Posterior vena cava (tissue), 2 donors: ENCODE measurements at regions of chr1 and their contacts with region 1.

Region 1: DNA sequence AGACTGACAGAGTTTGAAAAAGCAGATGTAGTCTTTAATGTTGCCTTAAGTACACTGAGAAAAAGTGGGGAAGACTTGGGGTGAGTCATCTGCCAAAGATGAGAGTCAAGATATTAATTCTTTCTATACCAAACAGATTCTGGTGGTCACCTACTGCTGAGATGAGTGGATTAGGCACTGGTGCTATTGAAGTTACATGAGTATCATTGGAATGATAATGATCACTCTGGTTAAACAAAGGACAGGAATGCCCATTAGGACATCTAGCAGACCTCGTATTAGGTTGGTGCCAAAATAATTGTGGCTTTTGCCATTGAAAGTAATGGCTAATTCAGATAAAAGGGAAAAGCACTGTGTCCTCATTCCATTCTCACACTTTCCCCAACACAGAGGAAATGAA is 1588.9 kb downstream of the KCNT2 start:
- DNase-seq: no peak

Region 2: DNA sequence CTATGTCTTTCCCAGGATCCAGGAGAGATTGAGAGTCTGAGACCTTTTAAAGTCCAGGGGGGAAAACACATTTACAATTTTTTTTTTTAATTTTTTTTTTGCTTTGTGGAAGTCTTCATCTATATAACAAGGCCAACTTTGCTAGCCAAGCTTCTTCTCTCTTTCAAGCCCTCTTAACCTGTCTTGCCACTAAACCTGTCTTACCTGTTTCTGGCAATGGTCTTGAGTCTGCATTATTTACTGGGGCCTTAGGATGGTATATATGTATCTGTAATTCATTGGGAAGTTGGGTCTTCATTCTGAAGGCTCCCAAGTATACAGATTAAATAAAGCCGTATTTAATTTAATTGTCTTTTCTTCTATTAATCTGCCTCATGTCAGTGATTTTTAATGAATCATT is 1082.1 kb before region 1 on chr1:
- intact Hi-C with region 1: loop called in 1 of 2 experiments (anchors 5 kb)
- DNase-seq: no peak

Region 3: GRCh38 chr1:195005338-195005737 is 14.0 kb before region 1 on chr1:
- intact Hi-C with region 1: loop called in 1 of 2 experiments (anchors 1 kb)
- DNase-seq: no peak

Region 4: DNA sequence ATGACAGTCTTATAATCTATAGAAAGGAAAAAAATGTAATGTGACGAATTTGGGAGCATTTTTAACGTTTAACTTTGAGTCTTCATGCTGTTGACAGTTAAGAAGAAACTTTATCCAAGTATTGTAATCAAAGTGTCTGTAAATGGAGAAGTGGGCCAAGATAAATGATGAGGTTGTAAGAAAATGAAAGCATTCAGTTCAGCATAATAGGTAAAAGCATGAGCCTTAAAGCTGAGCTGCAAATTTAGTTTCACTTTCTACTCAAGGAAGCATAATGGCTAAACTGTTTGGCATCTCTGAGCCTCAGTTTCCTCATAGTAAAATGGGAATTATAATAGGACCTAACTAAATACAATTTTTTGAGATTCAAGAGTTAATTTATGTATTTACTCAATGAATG is 34.1 kb after region 1 on chr1:
- intact Hi-C with region 1: no loop called
- DNase-seq: no peak